PC-9 (cell line): ENCODE measurements at regions of chr19 and their contacts with region 1.

Region 1: GRCh38 chr19:7919610-7920518 is at the start of gene SNAPC2:
- DNase-seq: peak; percentile 85 to 97
- H3K4me3 ChIP-seq: peak within 1 kb of the TSS; percentile 77
- H3K27ac ChIP-seq: peak within 1 kb of the TSS; percentile 46
- H3K4me1 ChIP-seq: peaks cover 23% of the 10 kb centered on the region
- H3K27me3 ChIP-seq: peaks cover 19% of the 10 kb centered on the region
- CTCF ChIP-seq: no peak
- total RNA-seq, gene SNAPC2: 37.5 and 42.1 TPM in 2 replicates

Region 2: GRCh38 chr19:7674010-7675005 is 245.6 kb before region 1 on chr19:
- CTCF ChIA-PET with region 1: no interaction called
- POLR2A ChIA-PET with region 1: no interaction called
- intact Hi-C with region 1: loop called (anchors 10 kb)
- DNase-seq: peak; percentile 33 to 66
- H3K4me3 ChIP-seq: no peak overlapping the region; the same call in 1 of the 2 replicates
- H3K27ac ChIP-seq: no peak overlapping the region
- H3K4me1 ChIP-seq: peaks cover 11% of the 10 kb centered on the region; the same call in 1 of the 2 replicates
- H3K27me3 ChIP-seq: peaks cover 73% of the 10 kb centered on the region
- CTCF ChIP-seq: no peak

Region 3: GRCh38 chr19:7847664-7848063 is 72.2 kb before region 1 on chr19:
- CTCF ChIA-PET with region 1: no interaction called
- POLR2A ChIA-PET with region 1: no interaction called
- intact Hi-C with region 1: no loop called
- DNase-seq: no peak
- H3K4me3 ChIP-seq: no peak overlapping the region
- H3K27ac ChIP-seq: no peak overlapping the region
- H3K4me1 ChIP-seq: peaks cover 5% of the 10 kb centered on the region; the same call in 1 of the 2 replicates
- H3K27me3 ChIP-seq: no peaks in the 10 kb centered on the region
- CTCF ChIP-seq: no peak

Region 4: DNA sequence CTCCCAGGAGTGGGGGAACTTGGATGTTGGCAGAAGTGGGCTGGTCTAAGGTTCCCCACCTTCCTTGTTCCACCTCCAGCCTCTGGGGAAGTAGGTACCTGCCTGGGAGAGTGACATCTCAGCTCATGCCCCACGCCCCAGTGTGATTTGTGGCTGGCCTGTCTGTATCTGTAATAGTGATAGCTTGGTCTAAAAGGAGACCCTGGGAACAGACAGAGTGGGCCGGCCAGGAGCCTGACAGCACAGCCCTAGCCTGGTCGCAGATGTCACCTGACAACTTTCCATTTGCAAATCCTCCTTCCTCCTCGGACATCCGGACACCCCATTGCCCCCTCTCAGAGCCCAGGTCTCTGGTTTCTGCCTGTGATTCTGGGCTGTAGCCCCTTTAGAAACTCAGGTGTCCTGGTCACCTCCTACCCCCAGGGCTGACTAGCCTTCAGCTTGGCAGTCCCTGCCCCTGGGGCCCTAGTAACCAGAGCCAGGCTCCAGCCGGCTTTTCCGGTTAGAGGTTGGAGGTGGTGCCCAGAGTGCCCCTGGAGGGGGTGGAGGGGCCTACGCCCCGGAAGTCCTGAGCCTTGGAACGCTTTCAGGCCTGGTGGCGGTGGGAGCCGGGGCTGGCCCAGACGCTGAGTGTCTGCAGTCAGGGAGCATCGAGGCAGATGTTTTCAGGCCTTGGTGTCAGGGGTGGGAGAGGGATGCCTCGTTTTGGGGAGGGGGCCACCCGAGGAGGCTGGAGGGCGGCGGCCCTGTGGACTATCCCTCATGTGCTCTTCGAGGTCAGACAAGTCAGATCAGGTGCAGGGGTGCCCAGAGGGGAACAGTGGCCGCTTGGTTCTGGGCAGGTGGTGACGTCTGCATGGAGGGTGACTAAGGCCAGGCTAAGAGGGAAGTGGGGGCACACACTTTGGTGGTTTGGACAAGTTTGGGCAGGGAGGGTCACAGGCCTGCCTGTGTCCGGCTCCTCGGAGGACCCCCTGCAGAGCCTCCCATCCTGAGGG is 25.0 kb before region 1 on chr19:
- CTCF ChIA-PET with region 1: no interaction called
- POLR2A ChIA-PET with region 1: interaction called, 39 read pairs
- intact Hi-C with region 1: no loop called
- DNase-seq: peak; percentile 92
- H3K4me3 ChIP-seq: peak overlapping the region; percentile 30; the same call in 1 of the 2 replicates
- H3K27ac ChIP-seq: peak overlapping the region; percentile 82
- H3K4me1 ChIP-seq: peaks cover 38% of the 10 kb centered on the region
- H3K27me3 ChIP-seq: no peaks in the 10 kb centered on the region
- CTCF ChIP-seq: no peak; the same call in 1 of the 2 replicates

Region 5: GRCh38 chr19:7903244-7904073 is 16.4 kb before region 1 on chr19 and contains the start of gene MAP2K7:
- CTCF ChIA-PET with region 1: interaction called, 7 read pairs
- POLR2A ChIA-PET with region 1: interaction called, 34 read pairs
- intact Hi-C with region 1: no loop called
- DNase-seq: peak; percentile 97 to 100
- H3K4me3 ChIP-seq: peak within 1 kb of the TSS; percentile 86
- H3K27ac ChIP-seq: peak within 1 kb of the TSS; percentile 68
- H3K4me1 ChIP-seq: peaks cover 16% of the 10 kb centered on the region; the same call in 1 of the 2 replicates
- H3K27me3 ChIP-seq: no peaks in the 10 kb centered on the region
- CTCF ChIP-seq: peak; percentile 51; the same call in 1 of the 2 replicates
- total RNA-seq, gene MAP2K7: 52.4 and 54.0 TPM in 2 replicates

Region 6: GRCh38 chr19:8342316-8342683 is 422.4 kb after region 1 on chr19:
- CTCF ChIA-PET with region 1: interaction called, 16 read pairs
- POLR2A ChIA-PET with region 1: no interaction called
- intact Hi-C with region 1: no loop called
- DNase-seq: no peak
- H3K4me3 ChIP-seq: no peak overlapping the region
- H3K27ac ChIP-seq: no peak overlapping the region
- H3K4me1 ChIP-seq: peaks cover 8% of the 10 kb centered on the region; the same call in 1 of the 2 replicates
- H3K27me3 ChIP-seq: no peaks in the 10 kb centered on the region
- CTCF ChIP-seq: no peak

Region 7: GRCh38 chr19:8438236-8438635 is 518.4 kb after region 1 on chr19:
- CTCF ChIA-PET with region 1: no interaction called
- POLR2A ChIA-PET with region 1: interaction called, 19 read pairs
- intact Hi-C with region 1: no loop called
- DNase-seq: no peak
- H3K4me3 ChIP-seq: no peak overlapping the region
- H3K27ac ChIP-seq: no peak overlapping the region
- H3K4me1 ChIP-seq: peaks cover 23% of the 10 kb centered on the region
- H3K27me3 ChIP-seq: no peaks in the 10 kb centered on the region
- CTCF ChIP-seq: no peak